ENCODE measurements at regions of chr3 and their contacts with region 1.

Region 1: GRCh38 chr3:25156626-25157025 is 271.4 kb upstream of the RARB start:
- DNase-seq: no peak
- H3K4me3 ChIP-seq: no peak overlapping the region
- H3K27ac ChIP-seq: no peak overlapping the region
- H3K27me3 ChIP-seq: no peaks in the 10 kb centered on the region
- CTCF ChIP-seq: no peak

Region 2: GRCh38 chr3:24802614-24803013 is 354.0 kb before region 1 on chr3:
- intact Hi-C with region 1: no loop called
- DNase-seq: no peak
- H3K4me3 ChIP-seq: no peak overlapping the region
- H3K27ac ChIP-seq: no peak overlapping the region
- H3K27me3 ChIP-seq: peaks cover 0 to under 1% (median 0%) of the 10 kb centered on the region in 45 donors
- CTCF ChIP-seq: no peak

Region 3: GRCh38 chr3:25044762-25045710 is 111.6 kb before region 1 on chr3:
- intact Hi-C with region 1: loop called in 1 of 2 experiments (anchors 10 kb)
- DNase-seq: peak in 2 of 10 donors; percentile 33 to 34
- H3K4me3 ChIP-seq: peak overlapping the region in 39 of 59 donors; percentile 3 to 50 (median 28)
- H3K27ac ChIP-seq: peak overlapping the region in 17 of 59 donors; percentile 8 to 74 (median 48)
- H3K27me3 ChIP-seq: peaks cover 0 to 4% (median 0%) of the 10 kb centered on the region in 45 donors
- CTCF ChIP-seq: peak in 2 of 56 donors; percentile 3 to 15

Region 4: DNA sequence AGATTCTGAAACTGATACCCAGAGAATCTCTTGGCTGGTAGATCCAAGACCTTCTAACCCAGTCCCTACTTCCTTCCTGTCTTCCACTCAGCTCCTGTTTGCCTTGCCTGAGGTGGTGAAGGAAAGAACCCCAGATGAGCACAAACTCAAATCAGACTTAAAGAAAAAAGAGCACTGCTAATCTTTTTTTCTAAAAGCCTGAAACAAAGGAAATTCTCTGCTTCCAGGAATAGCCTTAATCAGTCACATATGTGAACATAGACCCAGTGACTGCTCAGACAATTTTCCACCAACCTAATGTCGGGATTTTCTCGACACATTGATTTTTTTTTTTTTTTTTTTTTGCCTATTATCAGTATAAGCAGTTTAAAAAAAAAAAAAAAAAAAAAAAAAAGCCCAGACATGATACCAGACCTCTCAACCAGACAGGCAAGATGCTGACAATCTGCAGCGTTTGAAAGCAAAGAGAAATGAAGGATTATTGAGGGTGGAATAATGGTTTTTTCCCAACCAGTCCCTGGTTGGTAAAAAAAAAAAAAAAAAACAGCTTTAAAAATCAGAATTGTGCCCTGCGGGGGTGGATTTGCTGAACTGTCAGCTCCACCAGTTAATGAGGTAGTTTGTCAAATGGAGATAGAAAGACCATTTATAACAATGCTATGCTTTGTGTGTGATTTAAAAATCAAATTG is 14.6 kb after region 1 on chr3:
- intact Hi-C with region 1: no loop called
- DNase-seq: no peak
- H3K4me3 ChIP-seq: no peak overlapping the region
- H3K27ac ChIP-seq: no peak overlapping the region
- H3K27me3 ChIP-seq: no peaks in the 10 kb centered on the region
- CTCF ChIP-seq: no peak

Region 5: GRCh38 chr3:25281041-25281731 is 124.6 kb after region 1 on chr3:
- intact Hi-C with region 1: no loop called
- DNase-seq: no peak
- H3K4me3 ChIP-seq: no peak overlapping the region
- H3K27ac ChIP-seq: no peak overlapping the region
- H3K27me3 ChIP-seq: no peaks in the 10 kb centered on the region
- CTCF ChIP-seq: no peak

Measured in dorsolateral prefrontal cortex (tissue), 120 donors.